HepG2 (cell line): ENCODE measurements at regions of chr9 and their contacts with region 1.

Region 1: GRCh38 chr9:131178382-131178781 is 53.0 kb downstream of the NUP214 start:
- DNase-seq: peak; percentile 35
- ATAC-seq: peak; percentile 99
- H3K4me3 ChIP-seq: no peak overlapping the region
- H3K27ac ChIP-seq: no peak overlapping the region
- H3K4me1 ChIP-seq: no peaks in the 10 kb centered on the region
- H3K27me3 ChIP-seq: no peaks in the 10 kb centered on the region
- CTCF ChIP-seq: peak; percentile 91
- EP300 ChIP-seq: no peak
- POLR2A ChIP-seq: no peak
- RAD21 ChIP-seq: peak; percentile 81

Region 2: GRCh38 chr9:131167146-131167692 is 11.2 kb before region 1 on chr9:
- CTCF ChIA-PET with region 1: no interaction called
- POLR2A ChIA-PET with region 1: no interaction called
- in situ Hi-C with region 1: no loop called
- intact Hi-C with region 1: loop called (anchors 2 kb)
- DNase-seq: no peak
- ATAC-seq: no peak
- H3K4me3 ChIP-seq: no peak overlapping the region
- H3K27ac ChIP-seq: no peak overlapping the region
- H3K4me1 ChIP-seq: no peaks in the 10 kb centered on the region
- H3K27me3 ChIP-seq: no peaks in the 10 kb centered on the region
- CTCF ChIP-seq: no peak
- EP300 ChIP-seq: no peak
- POLR2A ChIP-seq: no peak
- RAD21 ChIP-seq: no peak

Region 3: GRCh38 chr9:131277910-131278701 is 99.7 kb after region 1 on chr9:
- CTCF ChIA-PET with region 1: no interaction called
- POLR2A ChIA-PET with region 1: no interaction called
- in situ Hi-C with region 1: no loop called
- intact Hi-C with region 1: loop called (anchors 5 kb)
- DNase-seq: peak; percentile 43
- ATAC-seq: peak; percentile 28
- H3K4me3 ChIP-seq: peak overlapping the region; percentile 45 to 68 (median 52); a peak in 4 of 6 replicates
- H3K27ac ChIP-seq: no peak overlapping the region
- H3K4me1 ChIP-seq: peaks cover 40% of the 10 kb centered on the region
- H3K27me3 ChIP-seq: peaks cover 22 to 85% of the 10 kb centered on the region in 2 experiments
- CTCF ChIP-seq: no peak
- EP300 ChIP-seq: no peak
- POLR2A ChIP-seq: no peak
- RAD21 ChIP-seq: no peak

Region 4: DNA sequence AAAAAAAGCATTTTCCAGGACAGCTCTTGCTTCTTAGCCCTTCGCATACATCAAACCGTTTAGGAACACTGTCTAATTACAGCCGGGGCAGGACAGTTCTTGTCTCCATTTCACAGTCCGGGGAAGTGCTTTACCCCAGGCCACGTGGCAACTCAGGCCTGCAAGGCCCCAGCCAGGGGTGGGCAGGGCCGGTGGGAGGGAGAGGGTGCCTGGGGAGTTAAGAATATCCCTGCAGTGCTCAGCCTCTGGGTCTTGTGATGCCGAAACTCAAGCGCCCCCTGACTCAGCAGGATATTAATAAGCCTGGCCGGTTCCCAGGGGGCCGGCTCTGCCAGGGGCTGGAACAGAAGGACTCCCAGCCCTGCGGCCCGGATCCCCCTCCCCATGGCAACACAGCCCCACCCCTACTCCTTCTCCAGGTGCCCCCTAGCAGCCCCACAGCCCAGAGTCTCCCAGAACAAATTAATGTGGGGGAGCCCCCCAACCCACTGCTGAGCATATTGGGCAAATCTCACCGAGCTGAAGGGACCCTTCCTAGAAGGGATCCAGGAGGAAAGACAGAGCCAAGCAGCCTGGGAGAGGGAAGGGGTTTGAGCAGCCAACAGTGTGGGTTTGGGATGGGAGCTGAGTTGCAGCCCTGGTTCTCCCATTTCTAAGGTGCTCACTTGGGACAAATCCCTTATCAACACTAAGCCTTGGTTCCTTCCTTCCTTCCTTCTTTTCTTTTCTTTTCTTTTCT is 156.4 kb after region 1 on chr9:
- CTCF ChIA-PET with region 1: interaction called, 30 read pairs
- POLR2A ChIA-PET with region 1: no interaction called
- in situ Hi-C with region 1: loop called (anchors 5 kb)
- intact Hi-C with region 1: loop called (anchors 1 kb)
- DNase-seq: no peak
- ATAC-seq: no peak
- H3K4me3 ChIP-seq: no peak overlapping the region
- H3K27ac ChIP-seq: no peak overlapping the region
- H3K4me1 ChIP-seq: peaks cover 8% of the 10 kb centered on the region; the same call in 1 of the 2 replicates
- H3K27me3 ChIP-seq: peaks cover 2 to 4% of the 10 kb centered on the region in 2 experiments; a peak in 3 of 5 replicates
- CTCF ChIP-seq: no peak
- EP300 ChIP-seq: no peak
- POLR2A ChIP-seq: no peak
- RAD21 ChIP-seq: no peak